IMR-90 (cell line): ENCODE measurements at regions of chr2 and their contacts with region 1.

Region 1: DNA sequence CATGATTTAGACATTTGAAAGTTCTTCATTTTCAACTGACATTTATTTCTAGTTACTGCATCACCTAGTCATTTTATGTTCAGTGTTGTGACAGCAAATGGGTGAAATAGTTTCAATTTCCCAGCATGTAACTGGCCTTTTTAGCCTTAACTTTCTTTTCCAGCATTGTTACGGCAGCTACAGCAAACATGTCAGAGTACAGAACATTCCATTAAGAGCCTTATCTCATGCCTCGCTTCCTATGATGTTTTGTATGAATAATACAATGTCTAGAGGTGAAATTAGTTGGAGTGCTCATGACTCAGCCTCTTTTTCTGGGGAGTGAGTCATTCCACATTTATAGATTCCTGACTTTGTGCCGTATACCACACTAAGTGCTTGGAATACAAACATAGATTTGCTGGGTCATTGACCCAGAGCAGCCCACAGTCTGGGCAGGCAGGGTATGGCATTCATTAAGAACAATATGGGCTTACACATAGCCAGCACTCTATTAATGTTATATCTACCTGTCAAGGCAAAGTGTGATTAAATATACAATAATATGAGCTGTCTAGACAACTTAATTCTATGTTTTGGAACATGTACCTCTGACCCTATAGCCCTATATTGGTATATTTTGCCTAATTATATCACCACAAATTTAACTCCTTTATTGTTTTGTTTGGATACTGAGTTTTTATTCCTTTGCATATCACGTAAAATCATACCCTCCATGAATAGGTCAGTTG is 72.2 kb downstream of the MAP2 start:
- DNase-seq: peak; percentile 98
- ATAC-seq: peak; percentile 97
- H3K4me3 ChIP-seq: no peak overlapping the region
- H3K27ac ChIP-seq: no peak overlapping the region
- H3K4me1 ChIP-seq: peaks cover 2% of the 10 kb centered on the region; the same call in 1 of the 2 replicates
- H3K27me3 ChIP-seq: no peaks in the 10 kb centered on the region
- CTCF ChIP-seq: no peak
- POLR2A ChIP-seq: no peak
- RAD21 ChIP-seq: no peak

Region 2: GRCh38 chr2:209473930-209474419 is 22.0 kb before region 1 on chr2:
- CTCF ChIA-PET with region 1: interaction called, 4 read pairs
- POLR2A ChIA-PET with region 1: no interaction called
- dilution Hi-C with region 1: no loop called
- in situ Hi-C with region 1: no loop called
- intact Hi-C with region 1: loop called (anchors 2 kb)
- DNase-seq: peak; percentile 88
- ATAC-seq: peak; percentile 87
- H3K4me3 ChIP-seq: no peak overlapping the region
- H3K27ac ChIP-seq: no peak overlapping the region
- H3K4me1 ChIP-seq: peaks cover 3% of the 10 kb centered on the region
- H3K27me3 ChIP-seq: no peaks in the 10 kb centered on the region
- CTCF ChIP-seq: no peak
- POLR2A ChIP-seq: no peak
- RAD21 ChIP-seq: no peak

Region 3: DNA sequence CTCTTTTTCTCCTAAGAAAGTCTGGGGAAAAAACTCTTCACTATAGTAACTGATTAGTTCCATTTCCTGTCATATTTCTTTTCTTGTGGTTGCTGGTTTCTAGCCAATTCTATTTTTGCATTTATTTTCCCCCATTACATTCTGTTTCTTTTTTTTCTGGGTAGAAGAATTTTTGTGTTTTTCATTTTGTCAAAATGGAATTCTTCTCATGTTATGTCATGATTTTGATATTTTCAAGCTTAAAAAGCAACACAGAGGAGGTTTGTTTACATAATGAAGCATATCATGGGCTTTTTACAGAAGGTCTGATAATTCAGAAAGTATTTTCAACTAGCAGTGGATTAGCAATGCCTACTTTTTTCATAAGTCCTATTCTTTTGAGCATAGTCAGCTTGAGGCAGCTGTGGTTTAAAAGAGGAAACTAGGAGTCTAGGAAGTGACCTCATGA is 29.8 kb after region 1 on chr2:
- CTCF ChIA-PET with region 1: no interaction called
- POLR2A ChIA-PET with region 1: no interaction called
- dilution Hi-C with region 1: no loop called
- in situ Hi-C with region 1: no loop called
- intact Hi-C with region 1: loop called (anchors 1 kb)
- DNase-seq: peak; percentile 94
- ATAC-seq: peak; percentile 90
- H3K4me3 ChIP-seq: no peak overlapping the region
- H3K27ac ChIP-seq: no peak overlapping the region
- H3K4me1 ChIP-seq: 0 out of 2 replicates have a peak, but pooled peaks cover 1% of the 10 kb centered on the region
- H3K27me3 ChIP-seq: no peaks in the 10 kb centered on the region
- CTCF ChIP-seq: no peak
- POLR2A ChIP-seq: no peak
- RAD21 ChIP-seq: no peak